Activated naive CD4-positive, alpha-beta T cell treated with anti-CD3 and anti-CD28 coated beads for 36 hours (primary cell): ENCODE measurements at regions of chr16 and their contacts with region 1.

Region 1: GRCh38 chr16:88561485-88562369 is 8.5 kb upstream of the ZC3H18 start:
- DNase-seq: peak; percentile 56
- H3K4me3 Mint-ChIP-seq: no peak overlapping the region
- H3K27ac Mint-ChIP-seq: no peak overlapping the region
- H3K4me1 Mint-ChIP-seq: peaks cover 12% of the 10 kb centered on the region
- H3K27me3 Mint-ChIP-seq: no peaks in the 10 kb centered on the region

Region 2: GRCh38 chr16:88505405-88506082 is 56.2 kb before region 1 on chr16:
- CTCF ChIA-PET with region 1: no interaction called
- intact Hi-C with region 1: no loop called
- DNase-seq: peak; percentile 76
- H3K4me3 Mint-ChIP-seq: no peak overlapping the region
- H3K27ac Mint-ChIP-seq: no peak overlapping the region
- H3K4me1 Mint-ChIP-seq: peaks cover 4% of the 10 kb centered on the region
- H3K27me3 Mint-ChIP-seq: no peaks in the 10 kb centered on the region

Region 3: DNA sequence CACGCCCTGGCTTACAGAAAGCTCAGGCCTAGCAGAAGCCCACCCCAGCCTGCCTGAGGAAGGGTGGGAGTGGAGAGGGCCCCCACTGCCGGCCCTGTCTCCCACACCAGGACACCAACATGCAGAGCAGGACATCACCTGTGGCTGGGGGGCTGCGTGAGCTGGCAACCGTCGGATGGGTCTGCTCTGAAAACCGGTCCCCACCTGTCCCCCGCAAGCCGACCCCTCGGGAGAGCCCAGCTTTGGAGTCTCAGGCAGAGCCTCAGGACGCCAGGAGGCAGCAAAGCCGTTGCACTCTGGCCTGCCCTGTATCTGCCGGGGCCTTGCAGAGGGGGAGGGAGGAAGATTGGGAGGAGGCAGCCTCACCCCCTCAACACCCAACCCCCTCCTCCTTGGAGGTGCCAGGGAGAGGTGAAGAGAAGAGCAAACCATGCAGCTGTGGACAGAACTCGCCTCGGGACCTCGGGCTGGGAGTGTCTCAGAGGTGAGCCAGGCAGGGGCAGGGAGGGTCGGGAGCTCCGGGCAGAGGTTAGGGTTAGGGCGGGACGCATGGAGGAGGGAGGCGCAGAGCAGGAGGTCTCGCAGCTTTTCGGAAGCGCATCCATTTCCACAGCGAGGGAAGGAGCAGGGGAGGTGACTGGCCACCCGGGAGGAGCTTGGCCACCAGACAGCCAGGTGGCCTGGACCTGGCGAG is 21.9 kb before region 1 on chr16:
- CTCF ChIA-PET with region 1: interaction called, 10 read pairs
- intact Hi-C with region 1: no loop called
- DNase-seq: no peak
- H3K4me3 Mint-ChIP-seq: no peak overlapping the region
- H3K27ac Mint-ChIP-seq: no peak overlapping the region
- H3K4me1 Mint-ChIP-seq: peaks cover 8% of the 10 kb centered on the region
- H3K27me3 Mint-ChIP-seq: no peaks in the 10 kb centered on the region